K562 (cell line): ENCODE measurements at regions of chr1 and their contacts with region 1.

Region 1: GRCh38 chr1:153990468-153991150 is at the start of gene RPS27:
- DNase-seq: peak; percentile 82 to 98 (median 89)
- ATAC-seq: peak; percentile 84
- H3K4me3 ChIP-seq: peak within 1 kb of the TSS; percentile 81
- H3K27ac ChIP-seq: peak within 1 kb of the TSS; percentile 98
- H3K4me1 ChIP-seq: peaks cover 6 to 11% of the 10 kb centered on the region in 2 experiments; a peak in 3 of 5 replicates
- H3K27me3 ChIP-seq: no peaks in the 10 kb centered on the region
- CTCF ChIP-seq: peak in 1 of 3 experiments; percentile 26; a peak in 1 of 6 replicates
- EP300 ChIP-seq: peak; percentile 53; the same call in 1 of the 2 replicates
- POLR2A ChIP-seq: peak; percentile 100
- RAD21 ChIP-seq: peak; percentile 25 to 26; a peak in 1 of 4 replicates
- polyA plus RNA-seq, gene RPS27: 6,302 to 8,843 TPM

Region 2: GRCh38 chr1:153670859-153671627 is 319.6 kb before region 1 on chr1 and contains the start of gene ILF2:
- CTCF ChIA-PET with region 1: no interaction called
- POLR2A ChIA-PET with region 1: interaction called, 10 read pairs
- in situ Hi-C with region 1: loop called (anchors 5 kb)
- intact Hi-C with region 1: loop called (anchors 5 kb)
- DNase-seq: peak; percentile 97 to 100 (median 98)
- ATAC-seq: peak; percentile 95
- H3K4me3 ChIP-seq: peak within 1 kb of the TSS; percentile 94
- H3K27ac ChIP-seq: peak within 1 kb of the TSS; percentile 92
- H3K4me1 ChIP-seq: peaks cover 0 to 4% of the 10 kb centered on the region in 2 experiments; a peak in 3 of 5 replicates
- H3K27me3 ChIP-seq: no peaks in the 10 kb centered on the region
- CTCF ChIP-seq: peak in 2 of 3 experiments; percentile 61 to 63; a peak in 4 of 6 replicates
- EP300 ChIP-seq: peak; percentile 66; the same call in 1 of the 2 replicates
- POLR2A ChIP-seq: peak; percentile 97
- RAD21 ChIP-seq: no peak; a peak in 1 of 4 replicates
- polyA plus RNA-seq, gene ILF2: 459 to 642 TPM

Region 3: DNA sequence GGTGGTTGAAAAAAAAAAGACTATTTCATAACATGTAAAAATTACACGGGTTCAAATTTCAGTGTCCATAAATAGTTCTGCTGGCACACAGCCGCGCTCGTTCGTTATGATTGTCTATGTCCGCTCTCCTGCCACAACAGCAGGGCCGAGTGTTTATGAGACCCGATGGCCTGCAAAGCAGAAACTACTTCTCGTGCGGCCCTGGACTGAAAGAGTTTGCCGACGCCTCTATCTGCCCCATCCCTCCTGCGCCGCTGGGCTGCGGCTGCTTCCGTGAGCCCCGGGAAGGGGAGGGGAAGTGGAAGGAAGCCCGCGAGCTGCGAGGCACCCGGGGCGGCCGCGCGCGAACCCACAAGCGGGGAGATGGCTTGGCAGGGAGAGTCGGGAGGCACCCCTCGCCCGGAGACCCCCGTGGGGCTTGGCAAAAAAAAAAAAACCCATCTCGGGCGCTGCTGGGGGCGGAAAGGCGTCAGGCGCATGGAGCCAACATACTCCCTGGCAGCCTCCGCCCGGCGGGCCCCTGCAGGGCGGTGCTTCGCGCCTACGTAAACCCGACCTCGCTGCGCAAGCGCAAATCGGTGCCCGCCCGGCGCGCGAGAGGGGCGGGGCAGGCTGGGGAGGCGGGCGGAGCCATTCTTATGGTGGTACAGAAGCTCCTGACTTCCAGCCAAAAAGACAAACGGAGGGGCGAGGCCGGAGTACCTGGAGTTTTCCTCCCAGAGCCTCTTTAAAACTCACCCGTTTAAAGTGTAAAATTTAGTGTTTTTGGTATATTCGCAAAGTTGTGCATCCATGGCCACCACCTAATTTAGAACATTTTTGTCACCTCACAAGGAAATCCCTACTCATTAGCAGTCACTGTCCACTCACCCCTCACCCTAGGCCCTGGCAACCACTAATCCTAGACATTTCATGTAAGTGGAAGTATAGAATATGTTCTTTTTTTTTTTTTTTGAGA is 207.1 kb before region 1 on chr1:
- CTCF ChIA-PET with region 1: no interaction called
- POLR2A ChIA-PET with region 1: interaction called, 8 read pairs
- in situ Hi-C with region 1: no loop called
- intact Hi-C with region 1: loop called (anchors 5 kb)
- DNase-seq: peak; percentile 93 to 98 (median 96)
- ATAC-seq: peak; percentile 98
- H3K4me3 ChIP-seq: peak overlapping the region; percentile 63
- H3K27ac ChIP-seq: peak overlapping the region; percentile 83
- H3K4me1 ChIP-seq: peaks cover 10 to 32% of the 10 kb centered on the region in 2 experiments
- H3K27me3 ChIP-seq: no peaks in the 10 kb centered on the region
- CTCF ChIP-seq: no peak
- EP300 ChIP-seq: no peak
- POLR2A ChIP-seq: peak; percentile 99
- RAD21 ChIP-seq: no peak

Region 4: DNA sequence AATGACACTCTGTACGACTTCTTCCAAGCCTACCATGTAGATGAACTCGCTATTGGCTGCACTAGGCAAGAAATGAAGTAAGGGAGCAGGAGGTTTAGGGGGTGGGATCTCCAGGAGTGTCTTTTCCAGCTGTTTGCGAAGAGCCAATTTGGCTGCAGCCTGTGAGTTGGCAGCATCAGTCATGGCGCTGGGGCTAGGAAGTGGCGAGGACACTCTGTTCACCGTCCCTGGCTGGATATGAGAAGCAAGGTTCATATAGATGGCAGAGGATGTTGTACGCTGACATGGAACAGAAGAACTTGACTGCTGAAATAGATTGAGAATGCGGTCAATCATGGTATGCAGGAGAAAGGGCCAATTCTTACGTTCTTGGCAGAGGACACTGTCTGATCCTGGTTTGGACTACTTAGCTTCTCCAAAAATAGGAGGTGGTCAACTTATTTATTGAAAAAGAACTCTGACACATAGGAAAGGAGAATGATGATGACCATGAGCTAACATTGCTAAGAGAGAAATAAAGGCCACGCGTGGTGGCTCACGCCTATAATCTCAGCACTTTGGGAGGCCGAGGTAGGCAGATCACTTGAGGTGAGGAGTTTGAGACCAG is 174.2 kb before region 1 on chr1:
- CTCF ChIA-PET with region 1: interaction called, 7 read pairs
- POLR2A ChIA-PET with region 1: interaction called, 7 read pairs
- in situ Hi-C with region 1: no loop called
- intact Hi-C with region 1: loop called (anchors 1 kb)
- DNase-seq: no peak
- ATAC-seq: no peak
- H3K4me3 ChIP-seq: no peak overlapping the region
- H3K27ac ChIP-seq: no peak overlapping the region
- H3K4me1 ChIP-seq: no peaks in the 10 kb centered on the region
- H3K27me3 ChIP-seq: no peaks in the 10 kb centered on the region
- CTCF ChIP-seq: no peak
- EP300 ChIP-seq: no peak
- POLR2A ChIP-seq: no peak
- RAD21 ChIP-seq: no peak

Region 5: DNA sequence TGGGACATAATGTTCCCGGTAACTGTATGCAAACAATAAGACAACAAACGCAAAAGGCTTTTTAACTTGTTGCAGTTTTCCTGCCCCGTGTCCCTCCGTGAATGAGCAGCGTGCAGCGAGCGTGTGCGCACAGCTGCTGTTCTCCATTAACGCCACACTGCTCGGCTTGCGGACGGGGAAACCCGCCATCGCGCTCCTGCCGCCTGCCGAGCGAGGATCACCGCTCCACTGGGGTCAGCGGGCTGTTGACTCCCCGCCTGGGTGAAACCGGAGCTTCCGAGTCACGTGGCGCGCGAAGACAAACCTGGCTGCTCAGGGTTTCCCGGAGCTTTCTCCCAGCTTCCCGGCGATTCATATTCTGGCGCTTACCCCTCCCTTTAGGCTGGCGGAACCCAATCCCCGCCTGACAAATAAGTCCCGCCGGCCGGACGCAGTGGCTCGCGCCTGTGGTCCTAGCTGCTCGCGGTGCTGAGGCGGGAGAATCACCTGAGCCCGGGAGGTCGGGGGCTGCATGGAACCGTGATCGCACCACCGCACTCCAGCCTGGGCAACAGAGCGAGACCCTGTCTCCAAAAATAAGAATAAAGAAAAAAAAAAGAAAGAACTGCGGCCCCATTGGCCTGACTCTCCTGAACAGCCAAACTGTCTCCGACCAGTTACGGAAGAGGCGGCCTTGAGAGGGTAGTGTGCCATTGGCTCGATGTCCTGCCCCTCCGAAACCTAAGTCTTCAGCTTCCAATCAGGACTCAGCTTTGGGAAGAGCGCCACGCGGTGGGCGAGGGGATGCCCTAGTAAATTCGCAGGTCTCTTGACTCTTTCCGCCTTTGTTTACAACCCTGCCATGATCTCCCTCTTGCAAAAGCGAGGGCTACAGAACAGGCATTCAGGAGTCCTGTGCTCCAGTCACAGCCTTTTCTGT is 23.3 kb before region 1 on chr1 and contains the start of gene CREB3L4:
- CTCF ChIA-PET with region 1: no interaction called
- POLR2A ChIA-PET with region 1: interaction called, 38 read pairs
- in situ Hi-C with region 1: no loop called
- intact Hi-C with region 1: no loop called
- DNase-seq: peak; percentile 85 to 98 (median 90)
- ATAC-seq: peak; percentile 87
- H3K4me3 ChIP-seq: peak within 1 kb of the TSS; percentile 51
- H3K27ac ChIP-seq: peak within 1 kb of the TSS; percentile 82
- H3K4me1 ChIP-seq: peaks cover 7 to 19% of the 10 kb centered on the region in 2 experiments; a peak in 4 of 5 replicates
- H3K27me3 ChIP-seq: no peaks in the 10 kb centered on the region
- CTCF ChIP-seq: peak; percentile 47 to 78 (median 68)
- EP300 ChIP-seq: peak; percentile 3; the same call in 1 of the 2 replicates
- POLR2A ChIP-seq: peak; percentile 91
- RAD21 ChIP-seq: peak in 1 of 2 experiments; percentile 42; a peak in 2 of 4 replicates
- polyA plus RNA-seq, gene CREB3L4: 13.3 to 17.2 TPM

Region 6: GRCh38 chr1:154012129-154012528 is 21.5 kb after region 1 on chr1:
- CTCF ChIA-PET with region 1: interaction called, 3 read pairs
- POLR2A ChIA-PET with region 1: interaction called, 24 read pairs
- in situ Hi-C with region 1: no loop called
- intact Hi-C with region 1: no loop called
- DNase-seq: no peak
- ATAC-seq: no peak
- H3K4me3 ChIP-seq: no peak overlapping the region
- H3K27ac ChIP-seq: no peak overlapping the region
- H3K4me1 ChIP-seq: no peaks in the 10 kb centered on the region; a peak in 2 of 5 replicates
- H3K27me3 ChIP-seq: peaks cover 4 to 16% of the 10 kb centered on the region in 2 experiments; a peak in 3 of 5 replicates
- CTCF ChIP-seq: no peak
- EP300 ChIP-seq: no peak
- POLR2A ChIP-seq: no peak
- RAD21 ChIP-seq: no peak

Region 7: GRCh38 chr1:154574716-154575115 is 584.1 kb after region 1 on chr1:
- CTCF ChIA-PET with region 1: no interaction called
- POLR2A ChIA-PET with region 1: no interaction called
- in situ Hi-C with region 1: no loop called
- intact Hi-C with region 1: no loop called
- DNase-seq: peak in 1 of 4 experiments; percentile 36
- ATAC-seq: no peak
- H3K4me3 ChIP-seq: no peak overlapping the region
- H3K27ac ChIP-seq: no peak overlapping the region
- H3K4me1 ChIP-seq: peaks cover 0 to 9% of the 10 kb centered on the region in 2 experiments; a peak in 2 of 5 replicates
- H3K27me3 ChIP-seq: peaks cover 19 to 42% of the 10 kb centered on the region in 2 experiments; a peak in 4 of 5 replicates
- CTCF ChIP-seq: no peak
- EP300 ChIP-seq: no peak
- POLR2A ChIP-seq: no peak
- RAD21 ChIP-seq: no peak